ENCODE measurements at regions of chr13 and their contacts with region 1.

Region 1: DNA sequence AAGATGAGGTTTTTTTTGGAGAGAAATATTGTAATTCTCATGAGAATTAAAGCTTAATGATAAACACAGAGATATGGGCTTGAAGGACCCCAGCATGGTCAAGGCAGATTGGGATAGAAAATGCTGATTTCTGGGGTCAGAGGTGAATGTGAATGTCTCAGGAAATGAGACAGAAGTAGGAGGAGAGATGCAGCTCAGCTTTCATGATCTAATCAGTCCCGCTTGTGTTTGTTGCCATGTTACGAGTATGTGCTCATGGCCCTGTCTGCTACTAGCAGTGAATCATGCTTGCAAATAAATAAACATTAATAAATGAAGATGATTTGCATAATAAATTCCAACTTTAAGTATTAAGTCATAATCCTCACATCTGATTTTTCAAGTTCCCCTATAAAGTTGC is 23.0 kb upstream of the NDFIP2 start:
- DNase-seq: peak; percentile 59
- H3K4me3 ChIP-seq: no peak overlapping the region
- H3K27me3 ChIP-seq: no peaks in the 10 kb centered on the region
- CTCF ChIP-seq: no peak

Region 2: DNA sequence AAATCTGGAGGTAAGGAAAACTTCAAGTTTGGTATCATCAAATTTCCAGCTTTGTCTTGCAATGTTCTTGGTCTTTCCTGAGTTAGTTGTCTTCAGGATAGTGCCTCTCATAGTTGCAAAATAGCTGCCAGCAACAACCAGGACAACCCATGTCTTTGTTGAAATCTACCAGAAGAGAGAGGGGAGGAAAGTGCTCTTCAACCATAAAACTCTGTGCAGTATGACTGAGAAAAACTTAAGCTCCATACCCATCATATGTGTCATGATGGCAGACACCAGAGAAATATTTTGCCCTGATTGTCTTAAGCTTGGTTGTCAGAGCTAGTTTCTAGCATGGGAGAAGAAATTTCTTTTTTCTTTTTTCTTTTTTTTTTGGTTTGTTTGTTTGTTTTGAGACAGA is 779.7 kb after region 1 on chr13:
- CTCF ChIA-PET with region 1: no interaction called
- POLR2A ChIA-PET with region 1: interaction called, 18 read pairs
- DNase-seq: no peak
- H3K4me3 ChIP-seq: no peak overlapping the region
- H3K27me3 ChIP-seq: no peaks in the 10 kb centered on the region
- CTCF ChIP-seq: no peak